A549 (cell line): ENCODE measurements at regions of chr15 and their contacts with region 1.

Region 1: GRCh38 chr15:99755692-99756409 is 22.6 kb upstream of the LYSMD4 start:
- DNase-seq: peak; percentile 71 to 84
- ATAC-seq: peak; percentile 85 to 96
- H3K4me3 ChIP-seq: no peak overlapping the region
- H3K27ac ChIP-seq: no peak overlapping the region
- H3K4me1 ChIP-seq: no peaks in the 10 kb centered on the region
- CTCF ChIP-seq: peak; percentile 90
- EP300 ChIP-seq: no peak
- POLR2A ChIP-seq: no peak
- RAD21 ChIP-seq: peak; percentile 89 to 94

Region 2: DNA sequence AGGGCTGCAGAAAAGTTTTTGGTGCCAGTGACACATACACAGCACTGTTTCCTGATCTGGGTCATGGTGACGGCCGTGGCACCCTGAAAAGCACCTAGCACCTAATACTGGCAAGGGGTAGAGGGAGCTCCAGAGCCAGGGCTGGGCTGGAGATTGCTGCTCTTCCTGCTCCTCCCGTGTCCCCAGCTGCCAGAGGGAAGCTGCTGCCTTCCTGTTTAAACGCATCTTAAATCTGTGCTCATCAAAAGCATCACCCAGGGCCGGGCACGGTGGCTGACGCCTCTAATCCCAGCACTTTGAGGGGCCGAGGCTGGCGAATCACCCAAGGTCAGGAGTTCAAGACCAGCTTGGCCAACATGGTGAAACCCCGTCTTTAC is 346.8 kb before region 1 on chr15:
- CTCF ChIA-PET with region 1: interaction called, 11 read pairs
- POLR2A ChIA-PET with region 1: no interaction called
- DNase-seq: peak; percentile 75 to 76
- ATAC-seq: peak; percentile 93 to 95
- H3K4me3 ChIP-seq: no peak overlapping the region
- H3K27ac ChIP-seq: peak overlapping the region in 1 of 2 experiments; percentile 42; a peak in 2 of 6 replicates
- H3K4me1 ChIP-seq: peaks cover 17% of the 10 kb centered on the region
- CTCF ChIP-seq: peak; percentile 59
- EP300 ChIP-seq: no peak
- POLR2A ChIP-seq: no peak
- RAD21 ChIP-seq: peak; percentile 76 to 82

Region 3: DNA sequence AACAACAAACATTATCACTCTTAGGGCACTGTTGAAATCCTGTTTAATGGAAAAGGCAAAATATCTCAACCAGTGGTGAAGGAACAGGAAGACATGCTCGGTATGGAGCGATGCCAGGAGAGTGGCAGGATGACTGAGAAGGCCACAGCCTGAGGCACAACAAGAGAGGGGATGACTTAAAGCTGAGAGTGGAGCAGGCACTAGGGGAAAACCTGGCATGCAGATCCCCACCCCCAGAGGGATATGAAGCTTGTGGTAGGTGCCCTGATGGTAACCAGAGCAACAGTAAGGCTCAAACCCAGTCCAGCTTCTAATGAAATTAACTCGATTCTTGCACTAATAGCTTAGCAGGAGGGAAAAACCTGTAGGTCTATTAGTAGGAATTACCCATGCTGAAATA is 63.0 kb before region 1 on chr15:
- CTCF ChIA-PET with region 1: no interaction called
- POLR2A ChIA-PET with region 1: no interaction called
- DNase-seq: no peak
- ATAC-seq: no peak
- H3K4me3 ChIP-seq: no peak overlapping the region
- H3K27ac ChIP-seq: no peak overlapping the region
- H3K4me1 ChIP-seq: no peaks in the 10 kb centered on the region
- CTCF ChIP-seq: no peak
- EP300 ChIP-seq: no peak
- POLR2A ChIP-seq: no peak
- RAD21 ChIP-seq: no peak

Region 4: GRCh38 chr15:99741835-99742234 is 14.0 kb before region 1 on chr15:
- CTCF ChIA-PET with region 1: interaction called, 30 read pairs
- POLR2A ChIA-PET with region 1: no interaction called
- DNase-seq: no peak
- ATAC-seq: no peak
- H3K4me3 ChIP-seq: no peak overlapping the region
- H3K27ac ChIP-seq: no peak overlapping the region
- H3K4me1 ChIP-seq: no peaks in the 10 kb centered on the region
- CTCF ChIP-seq: no peak
- EP300 ChIP-seq: no peak
- POLR2A ChIP-seq: no peak
- RAD21 ChIP-seq: no peak

Region 5: DNA sequence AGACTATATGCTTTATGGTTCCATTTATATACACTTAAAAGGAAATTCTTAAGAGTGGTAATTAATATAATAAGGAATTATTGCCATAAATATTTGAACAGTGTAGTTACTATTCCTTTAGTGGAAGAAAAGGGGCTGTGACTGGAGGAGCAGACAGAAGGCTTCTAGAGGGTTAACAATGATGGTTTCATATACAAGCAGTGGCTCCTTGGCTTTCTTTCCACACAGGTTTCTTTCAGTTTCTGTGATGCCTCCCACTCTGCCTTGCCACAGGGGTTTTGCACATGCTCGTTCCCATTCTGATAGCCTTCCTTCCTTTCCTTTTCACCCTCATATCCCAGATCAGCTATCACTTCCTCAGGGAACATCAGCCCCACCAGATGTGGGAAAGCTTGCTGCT is 86.2 kb after region 1 on chr15:
- CTCF ChIA-PET with region 1: no interaction called
- POLR2A ChIA-PET with region 1: no interaction called
- DNase-seq: no peak
- ATAC-seq: no peak
- H3K4me3 ChIP-seq: no peak overlapping the region
- H3K27ac ChIP-seq: no peak overlapping the region
- H3K4me1 ChIP-seq: no peaks in the 10 kb centered on the region
- CTCF ChIP-seq: no peak
- EP300 ChIP-seq: no peak
- POLR2A ChIP-seq: no peak
- RAD21 ChIP-seq: no peak